Motor neuron (in vitro differentiated cells): ENCODE measurements at regions of chr20 and their contacts with region 1.

Region 1: DNA sequence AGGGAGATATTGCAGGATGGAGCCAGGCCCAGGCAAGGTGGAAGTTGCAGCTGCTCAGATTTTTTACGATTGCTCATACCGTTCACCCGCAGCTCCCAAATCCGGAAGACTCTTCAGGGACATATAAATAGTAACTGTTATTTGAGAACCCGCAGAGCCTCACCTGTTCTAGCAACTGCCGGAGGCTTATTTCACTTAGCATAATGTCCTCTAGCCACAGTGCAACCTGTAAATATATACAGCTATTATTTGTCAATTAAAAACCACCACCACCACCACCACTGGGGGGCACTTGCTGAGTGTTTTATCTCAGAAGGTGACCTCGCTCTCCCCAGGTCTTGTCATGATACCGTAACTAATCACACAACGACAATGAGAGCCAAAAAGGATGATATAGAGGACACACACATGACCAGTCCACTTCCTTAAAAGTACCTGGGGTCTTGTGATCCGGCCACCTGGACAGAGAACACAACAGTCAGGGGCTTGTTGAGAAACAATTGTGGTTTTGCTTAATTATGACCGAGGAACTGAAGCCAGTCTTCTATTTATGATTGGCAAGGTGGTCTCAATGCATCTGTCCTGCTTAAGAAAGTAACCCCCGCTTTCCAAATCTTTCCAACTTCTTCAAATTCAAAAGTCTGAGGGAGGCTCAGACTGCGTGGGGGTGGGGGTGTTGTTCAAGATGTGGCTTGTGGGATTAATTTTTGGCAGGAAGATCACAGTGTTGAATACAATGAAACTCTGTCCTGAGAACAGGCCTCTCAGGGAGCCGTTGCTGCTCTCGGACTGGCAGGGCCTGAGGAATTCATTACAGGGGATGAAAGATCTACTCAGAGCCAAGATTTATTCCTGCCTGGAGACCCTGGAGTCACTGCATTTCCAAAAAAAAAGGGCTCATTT is 107.7 kb upstream of the PRND start:
- ATAC-seq: peak in 7 of 8 experiments; percentile 34 to 95 (median 76)
- H3K4me3 ChIP-seq: no peak overlapping the region
- H3K27ac ChIP-seq: no peak overlapping the region
- H3K4me1 ChIP-seq: peaks cover 3 to 4% of the 10 kb centered on the region in 2 donors

Region 2: GRCh38 chr20:4720041-4720976 is 106.3 kb after region 1 on chr20:
- in situ Hi-C with region 1: loop called in 4 of 9 experiments (anchors 10 kb)
- ATAC-seq: peak; percentile 39 to 91 (median 87)
- H3K4me3 ChIP-seq: no peak overlapping the region
- H3K27ac ChIP-seq: peak overlapping the region; percentile 44 to 71
- H3K4me1 ChIP-seq: peaks cover 4 to 7% of the 10 kb centered on the region in 2 donors